ENCODE measurements at regions of chr2 and their contacts with region 1.

Region 1: GRCh38 chr2:60861736-60862135 is 19.6 kb upstream of the REL start:
- DNase-seq: no peak
- H3K4me3 ChIP-seq: no peak overlapping the region
- CTCF ChIP-seq: no peak

Region 2: GRCh38 chr2:60966507-60967405 is 105.0 kb after region 1 on chr2:
- in situ Hi-C with region 1: loop called (anchors 5 kb)
- DNase-seq: no peak
- H3K4me3 ChIP-seq: no peak overlapping the region
- CTCF ChIP-seq: no peak